HCT116 (cell line): ENCODE measurements at regions of chr7 and their contacts with region 1.

Region 1: DNA sequence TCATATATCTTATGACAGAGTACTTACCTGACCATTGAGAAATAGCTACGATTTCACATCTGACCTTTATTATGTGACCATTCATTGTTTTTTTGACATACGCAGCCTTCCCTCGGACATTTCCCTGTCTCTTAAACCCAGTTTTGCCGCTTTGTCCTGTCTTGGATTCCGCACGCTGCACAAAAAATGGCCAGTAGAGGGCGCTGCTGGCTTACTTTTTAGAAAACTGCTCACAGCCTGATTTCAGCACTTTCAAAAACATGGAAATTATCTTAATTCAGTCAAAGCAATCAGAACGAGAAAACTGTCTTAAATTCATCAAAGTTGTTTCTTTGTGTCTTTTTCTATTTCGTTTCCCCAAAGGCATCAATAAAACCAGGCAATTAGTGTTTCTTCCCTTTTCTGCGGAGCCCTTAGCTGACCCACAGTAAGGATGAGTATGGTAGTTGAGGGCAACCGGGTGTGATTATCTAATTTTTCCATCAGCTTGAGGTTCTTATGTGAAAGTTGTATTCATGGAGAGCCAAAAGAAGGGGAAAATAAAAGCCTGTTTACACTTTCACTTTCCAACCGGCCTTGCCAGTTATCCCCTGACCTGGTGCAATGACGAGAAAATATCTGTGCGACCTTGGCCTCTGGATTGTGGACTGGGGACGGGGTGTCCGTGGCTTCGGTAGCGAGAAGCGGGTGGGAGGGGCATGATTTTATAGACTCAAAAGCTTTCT is 144.4 kb downstream of the DYNC1I1 start:
- DNase-seq: peak; percentile 59
- ATAC-seq: peak; percentile 90
- H3K4me3 ChIP-seq: no peak overlapping the region
- H3K27ac ChIP-seq: no peak overlapping the region
- H3K4me1 ChIP-seq: no peaks in the 10 kb centered on the region
- H3K27me3 ChIP-seq: peaks cover 58% of the 10 kb centered on the region
- CTCF ChIP-seq: peak; percentile 64 to 96 (median 81); a peak in 5 of 6 replicates
- POLR2A ChIP-seq: no peak
- RAD21 ChIP-seq: peak; percentile 83

Region 2: DNA sequence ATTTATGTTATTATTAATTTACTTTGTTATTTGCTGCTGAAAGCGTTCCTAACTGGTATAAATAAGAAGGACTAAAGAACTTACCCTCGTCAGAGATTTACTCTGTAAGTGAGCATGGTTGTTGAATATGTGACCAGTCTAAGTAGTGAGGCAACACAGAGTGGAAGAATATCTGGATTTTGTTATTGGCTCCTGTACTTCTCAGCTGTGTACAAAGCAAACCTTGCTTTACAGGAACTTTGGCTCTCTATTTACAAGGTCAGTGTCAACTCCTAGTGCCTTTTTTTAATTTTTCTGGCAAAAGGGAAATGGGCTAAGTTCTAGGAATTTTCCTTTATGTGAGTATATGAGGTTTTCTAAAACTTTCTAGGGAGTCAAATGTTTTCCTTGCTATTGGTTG is 356.1 kb before region 1 on chr7:
- CTCF ChIA-PET with region 1: no interaction called
- POLR2A ChIA-PET with region 1: no interaction called
- RAD21 ChIA-PET with region 1: no interaction called
- intact Hi-C with region 1: no loop called
- DNase-seq: no peak
- ATAC-seq: no peak
- H3K4me3 ChIP-seq: no peak overlapping the region
- H3K27ac ChIP-seq: no peak overlapping the region
- H3K4me1 ChIP-seq: no peaks in the 10 kb centered on the region
- H3K27me3 ChIP-seq: no peaks in the 10 kb centered on the region
- CTCF ChIP-seq: no peak
- POLR2A ChIP-seq: no peak
- RAD21 ChIP-seq: no peak

Region 3: DNA sequence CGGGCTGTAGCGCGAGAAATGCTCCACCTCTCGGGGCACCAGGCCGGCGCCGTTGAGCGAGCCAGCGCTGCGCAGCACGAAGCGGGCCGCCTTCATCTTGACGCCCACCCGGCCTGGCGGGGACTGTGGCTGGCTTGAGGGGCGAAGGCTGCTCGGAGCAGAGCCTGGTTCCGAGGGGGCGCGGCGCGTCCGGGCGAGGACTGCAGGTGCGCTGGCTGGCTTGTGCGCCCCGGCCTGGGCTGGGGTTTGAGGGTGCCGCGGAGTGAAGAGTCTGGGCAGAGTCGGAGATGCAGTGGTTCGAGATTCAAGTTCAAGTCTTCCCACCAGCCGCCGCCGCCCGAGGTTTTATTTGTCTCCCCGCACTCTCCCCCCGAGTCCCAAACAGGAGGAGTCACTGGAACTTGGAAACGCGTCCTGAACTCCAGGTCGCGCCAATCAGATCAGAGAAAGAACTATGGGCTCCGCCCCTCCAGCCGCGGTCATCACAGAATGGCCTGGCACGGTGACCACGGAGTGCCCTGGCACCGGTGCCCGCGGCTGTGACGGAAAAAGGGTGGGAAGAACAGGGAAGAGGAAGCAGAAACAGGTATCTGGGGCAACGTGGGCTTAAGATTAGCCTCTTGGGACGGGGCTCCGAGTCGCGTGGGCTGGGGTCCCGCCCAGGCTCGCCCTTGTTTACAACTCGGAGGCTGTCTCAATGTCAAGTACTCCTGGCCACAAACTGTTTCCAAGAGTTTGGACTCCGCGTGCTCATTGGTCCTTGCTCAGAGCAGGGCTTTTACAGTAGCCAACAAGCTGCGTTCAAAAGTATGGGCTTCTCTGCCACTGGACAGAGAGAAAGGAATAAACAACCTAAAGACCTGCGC is 320.3 kb before region 1 on chr7 and contains the start of gene PDK4:
- CTCF ChIA-PET with region 1: no interaction called
- POLR2A ChIA-PET with region 1: no interaction called
- RAD21 ChIA-PET with region 1: no interaction called
- intact Hi-C with region 1: no loop called
- DNase-seq: peak; percentile 51
- ATAC-seq: peak; percentile 96
- H3K4me3 ChIP-seq: peak within 1 kb of the TSS; percentile 54 to 64
- H3K27ac ChIP-seq: peak within 1 kb of the TSS; percentile 21; the same call in 1 of the 2 replicates
- H3K4me1 ChIP-seq: peaks cover 0 to 15% of the 10 kb centered on the region in 2 experiments; a peak in 3 of 4 replicates
- H3K27me3 ChIP-seq: no peaks in the 10 kb centered on the region
- CTCF ChIP-seq: no peak
- POLR2A ChIP-seq: no peak
- RAD21 ChIP-seq: no peak
- total RNA-seq, gene PDK4: 2.1 TPM

Region 4: DNA sequence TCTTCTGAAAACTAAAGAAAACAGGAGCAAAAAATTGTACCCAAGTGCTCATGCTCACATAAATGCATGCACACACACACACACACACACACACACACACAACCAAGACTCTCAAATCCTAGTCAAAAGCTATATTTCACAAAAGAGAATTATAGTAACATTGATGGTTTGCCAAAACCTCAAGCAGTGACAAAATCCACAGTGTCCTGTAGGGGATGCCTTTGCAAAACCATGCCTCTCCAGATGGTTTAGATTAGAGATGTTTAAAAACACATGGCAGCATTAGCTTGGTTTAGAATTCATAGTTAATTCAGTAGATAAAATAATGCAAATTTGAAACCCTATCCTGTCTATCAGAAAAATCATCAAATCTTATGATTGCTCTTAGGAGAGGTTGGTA is 87.8 kb after region 1 on chr7:
- CTCF ChIA-PET with region 1: no interaction called
- POLR2A ChIA-PET with region 1: no interaction called
- RAD21 ChIA-PET with region 1: no interaction called
- intact Hi-C with region 1: no loop called
- DNase-seq: no peak
- ATAC-seq: no peak
- H3K4me3 ChIP-seq: no peak overlapping the region
- H3K27ac ChIP-seq: no peak overlapping the region
- H3K4me1 ChIP-seq: no peaks in the 10 kb centered on the region
- H3K27me3 ChIP-seq: peaks cover 60% of the 10 kb centered on the region
- CTCF ChIP-seq: no peak
- POLR2A ChIP-seq: no peak
- RAD21 ChIP-seq: no peak

Region 5: GRCh38 chr7:96061844-96062243 is 145.1 kb after region 1 on chr7:
- CTCF ChIA-PET with region 1: no interaction called
- POLR2A ChIA-PET with region 1: no interaction called
- RAD21 ChIA-PET with region 1: no interaction called
- intact Hi-C with region 1: no loop called
- DNase-seq: no peak
- ATAC-seq: no peak
- H3K4me3 ChIP-seq: no peak overlapping the region
- H3K27ac ChIP-seq: no peak overlapping the region
- H3K4me1 ChIP-seq: no peaks in the 10 kb centered on the region
- H3K27me3 ChIP-seq: peaks cover 86% of the 10 kb centered on the region
- CTCF ChIP-seq: no peak
- POLR2A ChIP-seq: no peak
- RAD21 ChIP-seq: no peak

Region 6: DNA sequence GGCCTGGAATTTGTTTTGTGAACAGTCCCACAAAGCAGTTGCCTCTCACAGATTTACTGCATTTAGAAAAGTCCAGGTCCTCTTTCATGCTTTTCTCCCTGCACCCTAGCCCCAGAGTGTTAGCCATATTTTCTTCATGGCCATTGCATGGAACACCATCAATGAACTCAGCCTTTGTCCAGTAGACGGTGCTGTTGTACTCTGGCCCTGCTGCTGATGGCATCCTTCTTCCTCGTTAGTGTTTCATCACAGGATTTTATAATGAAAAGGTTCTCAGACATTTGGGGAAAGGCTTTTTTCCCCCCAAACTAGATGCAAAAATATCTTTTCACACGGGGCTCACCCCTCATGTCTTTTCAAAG is 498.2 kb after region 1 on chr7:
- CTCF ChIA-PET with region 1: no interaction called
- POLR2A ChIA-PET with region 1: no interaction called
- RAD21 ChIA-PET with region 1: no interaction called
- intact Hi-C with region 1: loop called (anchors 5 kb)
- DNase-seq: peak; percentile 13
- ATAC-seq: peak; percentile 83
- H3K4me3 ChIP-seq: no peak overlapping the region
- H3K27ac ChIP-seq: no peak overlapping the region
- H3K4me1 ChIP-seq: no peaks in the 10 kb centered on the region
- H3K27me3 ChIP-seq: peaks cover 19% of the 10 kb centered on the region
- CTCF ChIP-seq: peak; percentile 44 to 87 (median 75); a peak in 5 of 6 replicates
- POLR2A ChIP-seq: no peak
- RAD21 ChIP-seq: peak; percentile 73

Region 7: GRCh38 chr7:97064967-97065587 is 1148.3 kb after region 1 on chr7:
- CTCF ChIA-PET with region 1: interaction called, 4 read pairs
- POLR2A ChIA-PET with region 1: no interaction called
- RAD21 ChIA-PET with region 1: no interaction called
- intact Hi-C with region 1: loop called (anchors 1 kb)
- DNase-seq: peak; percentile 34
- ATAC-seq: peak; percentile 90
- H3K4me3 ChIP-seq: no peak overlapping the region
- H3K27ac ChIP-seq: no peak overlapping the region
- H3K4me1 ChIP-seq: no peaks in the 10 kb centered on the region
- H3K27me3 ChIP-seq: peaks cover 3% of the 10 kb centered on the region; the same call in 1 of the 2 replicates
- CTCF ChIP-seq: peak in 2 of 3 experiments; percentile 73 to 76; a peak in 4 of 6 replicates
- POLR2A ChIP-seq: no peak
- RAD21 ChIP-seq: peak; percentile 45

Region 8: DNA sequence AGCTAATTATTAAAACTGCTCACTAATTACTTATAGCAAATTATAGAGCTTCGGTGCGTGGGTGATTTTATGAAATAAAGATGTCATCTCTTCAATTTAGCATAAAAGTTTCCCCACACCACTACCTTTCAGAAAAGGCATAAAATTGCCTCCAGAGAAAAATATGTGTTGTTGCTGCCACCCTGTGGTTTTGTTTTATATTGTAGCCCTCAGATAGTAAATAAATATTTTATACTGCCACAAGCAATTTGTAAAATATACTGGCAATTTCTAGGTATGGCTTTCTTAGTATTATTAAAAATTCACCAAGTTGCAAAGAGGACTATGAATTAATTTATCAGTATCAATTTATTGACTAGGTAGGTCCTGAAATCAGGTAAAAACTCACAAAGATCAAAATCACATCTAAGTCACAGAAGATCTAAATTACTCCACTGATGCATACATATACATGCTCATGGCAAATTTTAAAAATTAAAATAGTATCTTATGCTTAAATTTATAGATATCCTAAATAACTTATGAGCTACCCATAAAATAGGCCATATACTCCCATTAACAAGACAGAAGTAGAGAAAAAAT is 1929.0 kb after region 1 on chr7:
- CTCF ChIA-PET with region 1: no interaction called
- POLR2A ChIA-PET with region 1: no interaction called
- RAD21 ChIA-PET with region 1: no interaction called
- intact Hi-C with region 1: loop called (anchors 5 kb)
- DNase-seq: peak; percentile 13
- ATAC-seq: peak; percentile 67
- H3K4me3 ChIP-seq: no peak overlapping the region
- H3K27ac ChIP-seq: no peak overlapping the region
- H3K4me1 ChIP-seq: no peaks in the 10 kb centered on the region
- H3K27me3 ChIP-seq: no peaks in the 10 kb centered on the region
- CTCF ChIP-seq: peak; percentile 27 to 62 (median 54); a peak in 4 of 6 replicates
- POLR2A ChIP-seq: no peak
- RAD21 ChIP-seq: peak; percentile 64